ENCODE measurements at regions of chr21 and their contacts with region 1.

Region 1: DNA sequence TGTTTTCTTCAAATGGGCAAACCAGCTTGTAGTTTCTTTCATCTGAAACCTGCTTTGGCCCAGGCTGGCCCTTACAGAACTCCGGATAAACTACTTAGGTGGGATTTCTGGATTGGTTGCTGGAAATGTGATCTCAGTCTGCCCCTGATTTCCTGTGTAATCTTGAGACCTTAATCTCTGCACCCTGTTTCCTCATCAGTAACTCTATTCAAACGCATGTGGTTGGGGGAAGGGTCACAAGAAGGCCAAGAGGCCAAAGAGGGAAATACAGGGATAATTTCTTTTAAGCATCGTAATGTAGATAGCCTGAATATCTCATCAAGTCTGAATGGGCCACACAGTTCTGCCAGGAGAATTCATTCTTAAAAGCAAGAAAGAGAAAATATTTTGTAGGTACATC is 483.6 kb downstream of the LTN1 start:
- DNase-seq: no peak
- ATAC-seq: peak in 2 of 4 donors; percentile 33 to 65
- H3K4me3 ChIP-seq: no peak overlapping the region
- H3K27ac ChIP-seq: peak overlapping the region in 2 of 12 donors; percentile 3 to 9
- H3K4me1 ChIP-seq: peaks cover 0 to 11% (median 0%) of the 10 kb centered on the region in 12 donors
- H3K27me3 ChIP-seq: no peaks in the 10 kb centered on the region
- CTCF ChIP-seq: no peak
- POLR2A ChIP-seq: no peak

Region 2: GRCh38 chr21:28357743-28358142 is 151.3 kb before region 1 on chr21:
- intact Hi-C with region 1: loop called in 1 of 10 experiments (anchors 10 kb)
- DNase-seq: no peak
- ATAC-seq: no peak
- H3K4me3 ChIP-seq: no peak overlapping the region
- H3K27ac ChIP-seq: no peak overlapping the region
- H3K4me1 ChIP-seq: no peaks in the 10 kb centered on the region
- H3K27me3 ChIP-seq: no peaks in the 10 kb centered on the region
- CTCF ChIP-seq: no peak
- POLR2A ChIP-seq: no peak

Region 3: DNA sequence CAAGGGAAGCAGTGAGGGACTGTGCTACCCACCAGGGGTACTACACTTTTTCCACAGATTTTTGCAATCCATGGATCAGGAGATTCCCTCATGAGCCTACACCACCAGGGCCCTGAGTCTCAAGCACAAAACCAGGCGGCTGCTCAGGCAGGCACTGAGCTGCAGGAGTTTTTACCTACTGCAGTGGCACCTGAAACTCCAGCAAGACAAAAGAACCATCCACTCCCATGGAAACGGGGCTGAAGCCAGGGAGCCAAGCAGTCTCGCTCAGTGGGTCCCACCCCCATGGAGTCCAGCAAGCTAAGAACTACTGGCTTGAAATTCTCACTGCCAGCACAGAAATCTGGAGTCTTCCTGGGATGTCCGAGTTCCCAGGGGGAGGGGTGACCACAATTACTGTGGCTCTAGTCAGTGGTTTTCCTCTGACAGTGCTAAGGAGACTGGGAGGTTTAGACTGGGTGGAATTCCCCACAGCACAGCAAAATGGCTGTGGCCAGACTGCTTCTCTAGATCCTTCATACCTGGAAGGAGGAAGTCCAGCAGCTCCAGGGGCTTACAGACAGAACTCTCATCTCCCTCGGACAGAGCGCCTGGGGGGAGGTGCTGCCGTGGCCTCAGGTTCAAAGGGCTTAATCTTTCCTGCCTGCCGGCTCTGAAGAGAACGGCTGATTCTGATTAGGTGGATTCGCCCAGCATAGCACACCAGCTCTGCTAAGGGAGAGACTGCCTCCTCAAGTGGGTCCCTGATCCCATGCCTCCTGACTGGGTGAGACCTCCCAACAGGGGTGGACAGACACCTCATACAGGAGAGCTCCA is 45.8 kb after region 1 on chr21:
- intact Hi-C with region 1: no loop called
- DNase-seq: no peak
- ATAC-seq: no peak
- H3K4me3 ChIP-seq: no peak overlapping the region
- H3K27ac ChIP-seq: no peak overlapping the region
- H3K4me1 ChIP-seq: no peaks in the 10 kb centered on the region
- H3K27me3 ChIP-seq: no peaks in the 10 kb centered on the region
- CTCF ChIP-seq: no peak
- POLR2A ChIP-seq: no peak